Ascending aorta (tissue), 2 donors: ENCODE measurements at regions of chr17 and their contacts with region 1.

Region 1: GRCh38 chr17:39730095-39730921 is at the start of gene MIEN1:
- DNase-seq: peak; percentile 36 to 95
- H3K4me3 ChIP-seq: peak within 1 kb of the TSS; percentile 73 to 87
- H3K27ac ChIP-seq: peak within 1 kb of the TSS; percentile 80 to 95
- H3K4me1 ChIP-seq: peaks cover 0 to 10% of the 10 kb centered on the region in 2 donors
- H3K27me3 ChIP-seq: no peaks in the 10 kb centered on the region
- CTCF ChIP-seq: peak; percentile 89 to 96 (median 95)
- total RNA-seq, gene MIEN1: 64.2 TPM

Region 2: GRCh38 chr17:39621523-39622379 is 108.6 kb before region 1 on chr17:
- intact Hi-C with region 1: loop called (anchors 1 kb)
- DNase-seq: peak; percentile 53 to 93
- H3K4me3 ChIP-seq: no peak overlapping the region
- H3K27ac ChIP-seq: no peak overlapping the region
- H3K4me1 ChIP-seq: peaks cover 1 to 5% of the 10 kb centered on the region in 2 donors
- H3K27me3 ChIP-seq: peaks cover 4% of the 10 kb centered on the region
- CTCF ChIP-seq: peak; percentile 98 to 100 (median 100)

Region 3: DNA sequence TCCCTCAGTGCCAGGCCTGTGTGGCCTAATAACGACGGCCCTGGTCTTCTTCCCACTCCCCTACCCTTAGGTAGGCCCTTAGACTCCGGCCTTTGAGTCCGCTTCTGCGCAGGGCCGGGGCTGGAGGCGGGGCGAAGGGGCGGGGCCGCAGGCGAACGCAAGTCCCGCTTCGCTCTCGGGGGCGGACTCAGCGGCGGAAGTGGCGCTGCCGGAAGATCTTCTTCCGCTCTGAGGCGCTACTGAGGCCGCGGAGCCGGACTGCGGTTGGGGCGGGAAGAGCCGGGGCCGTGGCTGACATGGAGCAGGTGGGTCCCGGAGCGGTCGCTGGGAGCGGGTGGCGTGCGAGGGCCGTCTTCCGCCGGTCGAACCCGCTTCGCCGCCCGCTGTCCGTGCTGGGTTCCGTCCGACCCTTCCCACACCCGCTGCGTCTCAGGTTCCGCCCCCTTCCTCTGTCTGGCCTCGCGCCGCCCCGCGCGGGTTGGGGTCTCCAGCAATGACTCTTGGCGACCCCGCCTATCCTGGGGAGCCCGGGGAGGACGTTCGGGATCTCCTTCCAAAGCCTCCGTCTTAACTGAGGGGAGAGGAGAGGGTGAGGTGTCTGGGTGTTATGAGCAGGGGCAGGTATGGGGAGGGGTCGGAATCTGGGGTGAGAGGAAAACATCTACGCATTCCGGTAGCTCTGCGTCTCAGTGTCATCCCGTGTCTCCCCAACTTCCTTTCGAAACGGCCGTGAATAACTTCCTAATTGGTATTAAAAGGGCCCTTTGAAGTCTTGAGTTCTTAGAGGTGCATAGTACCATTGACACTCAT is 93.2 kb before region 1 on chr17 and contains the start of gene STARD3:
- intact Hi-C with region 1: loop called (anchors 5 kb)
- DNase-seq: peak; percentile 63 to 93
- H3K4me3 ChIP-seq: peak within 1 kb of the TSS; percentile 68 to 84
- H3K27ac ChIP-seq: peak within 1 kb of the TSS; percentile 83 to 89
- H3K4me1 ChIP-seq: peaks cover 11 to 27% of the 10 kb centered on the region in 2 donors
- H3K27me3 ChIP-seq: no peaks in the 10 kb centered on the region
- CTCF ChIP-seq: peak; percentile 13 to 34 (median 14)
- total RNA-seq, gene STARD3: 87.6 TPM

Region 4: DNA sequence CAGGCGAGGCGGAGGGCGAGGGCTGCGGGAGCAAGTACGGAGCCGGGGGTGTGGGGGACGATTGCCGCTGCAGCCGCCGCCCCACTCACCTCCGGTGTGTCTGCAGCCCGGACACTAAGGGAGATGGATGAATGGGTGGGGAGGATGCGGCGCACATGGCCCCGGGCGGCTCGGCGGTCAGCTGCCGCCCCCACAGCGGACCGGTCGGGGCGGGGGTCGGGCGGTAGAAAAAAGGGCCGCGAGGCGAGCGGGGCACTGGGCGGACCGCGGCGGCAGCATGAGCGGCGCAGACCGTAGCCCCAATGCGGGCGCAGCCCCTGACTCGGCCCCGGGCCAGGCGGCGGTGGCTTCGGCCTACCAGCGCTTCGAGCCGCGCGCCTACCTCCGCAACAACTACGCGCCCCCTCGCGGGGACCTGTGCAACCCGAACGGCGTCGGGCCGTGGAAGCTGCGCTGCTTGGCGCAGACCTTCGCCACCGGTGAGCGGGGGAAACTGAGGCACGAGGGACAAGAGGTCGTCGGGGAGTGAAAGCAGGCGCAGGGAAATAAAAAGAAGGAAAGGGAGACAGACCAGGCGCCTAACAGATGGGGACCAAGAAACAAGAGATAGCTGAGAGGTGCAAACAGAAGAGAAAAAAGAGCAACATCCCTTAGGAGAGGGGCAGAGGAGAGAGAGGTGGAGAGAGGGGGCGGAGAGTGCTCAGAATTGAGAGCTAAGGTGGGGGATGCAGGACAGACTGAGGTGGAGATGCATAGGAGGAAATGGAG is 61.9 kb before region 1 on chr17 and contains the start of gene PNMT:
- intact Hi-C with region 1: loop called (anchors 5 kb)
- DNase-seq: no peak
- H3K4me3 ChIP-seq: peak within 1 kb of the TSS; percentile 37 to 63
- H3K27ac ChIP-seq: peak within 1 kb of the TSS; percentile 68 to 74
- H3K4me1 ChIP-seq: peaks cover 25 to 58% of the 10 kb centered on the region in 2 donors
- H3K27me3 ChIP-seq: no peaks in the 10 kb centered on the region
- CTCF ChIP-seq: peak; percentile 52 to 70 (median 54)
- total RNA-seq, gene PNMT: 5.1 TPM

Region 5: GRCh38 chr17:39687811-39688518 is 42.3 kb before region 1 on chr17 and contains the start of gene PGAP3:
- intact Hi-C with region 1: loop called (anchors 1 kb)
- DNase-seq: peak; percentile 60 to 93
- H3K4me3 ChIP-seq: peak within 1 kb of the TSS; percentile 50 to 79
- H3K27ac ChIP-seq: peak within 1 kb of the TSS; percentile 92 to 95
- H3K4me1 ChIP-seq: peaks cover 0 to 13% of the 10 kb centered on the region in 2 donors
- H3K27me3 ChIP-seq: no peaks in the 10 kb centered on the region
- CTCF ChIP-seq: no peak
- total RNA-seq, gene PGAP3: 29.5 TPM

Region 6: DNA sequence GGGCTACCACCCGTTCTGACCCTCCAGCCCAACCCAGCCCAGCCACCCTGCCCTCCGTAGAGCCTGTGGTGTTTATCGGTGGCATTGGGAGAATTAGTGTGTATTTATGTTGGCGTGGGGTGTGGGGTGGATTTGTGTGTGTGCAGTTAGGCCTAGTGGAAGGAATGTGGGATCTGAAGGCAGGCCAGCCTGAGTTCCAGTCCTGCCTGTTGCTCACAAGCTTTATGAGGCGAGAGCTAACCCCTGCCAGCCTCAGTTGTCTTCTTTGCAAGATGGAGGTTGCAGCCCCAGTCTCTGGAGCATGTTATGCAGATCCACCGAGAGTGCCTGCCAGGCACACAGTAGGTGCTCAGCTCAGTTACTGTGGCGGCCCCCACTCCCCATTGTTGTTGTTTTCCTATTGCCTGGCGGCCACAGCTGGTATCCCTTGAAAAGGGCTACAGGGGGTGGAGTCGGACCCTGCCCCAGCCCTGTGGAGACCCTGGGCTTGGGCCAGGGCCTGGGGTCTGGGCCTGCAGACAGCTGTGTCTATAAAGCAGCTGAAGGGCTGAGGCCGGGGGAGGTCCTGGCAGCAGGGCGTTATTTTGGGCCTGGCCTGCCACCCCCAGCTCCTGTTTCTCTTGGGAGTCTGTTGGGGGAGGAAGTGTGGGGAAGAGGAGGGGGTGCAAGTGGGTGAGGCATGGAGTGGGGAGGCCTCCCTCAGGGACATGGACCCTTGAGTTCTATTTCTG is 25.3 kb before region 1 on chr17:
- intact Hi-C with region 1: loop called (anchors 2 kb)
- DNase-seq: peak in 1 of 2 donors; percentile 83
- H3K4me3 ChIP-seq: peak overlapping the region in 1 of 2 donors; percentile 38
- H3K27ac ChIP-seq: peak overlapping the region; percentile 83 to 88
- H3K4me1 ChIP-seq: peaks cover 7 to 38% of the 10 kb centered on the region in 2 donors
- H3K27me3 ChIP-seq: no peaks in the 10 kb centered on the region
- CTCF ChIP-seq: peak; percentile 51 to 78 (median 65)

Region 7: DNA sequence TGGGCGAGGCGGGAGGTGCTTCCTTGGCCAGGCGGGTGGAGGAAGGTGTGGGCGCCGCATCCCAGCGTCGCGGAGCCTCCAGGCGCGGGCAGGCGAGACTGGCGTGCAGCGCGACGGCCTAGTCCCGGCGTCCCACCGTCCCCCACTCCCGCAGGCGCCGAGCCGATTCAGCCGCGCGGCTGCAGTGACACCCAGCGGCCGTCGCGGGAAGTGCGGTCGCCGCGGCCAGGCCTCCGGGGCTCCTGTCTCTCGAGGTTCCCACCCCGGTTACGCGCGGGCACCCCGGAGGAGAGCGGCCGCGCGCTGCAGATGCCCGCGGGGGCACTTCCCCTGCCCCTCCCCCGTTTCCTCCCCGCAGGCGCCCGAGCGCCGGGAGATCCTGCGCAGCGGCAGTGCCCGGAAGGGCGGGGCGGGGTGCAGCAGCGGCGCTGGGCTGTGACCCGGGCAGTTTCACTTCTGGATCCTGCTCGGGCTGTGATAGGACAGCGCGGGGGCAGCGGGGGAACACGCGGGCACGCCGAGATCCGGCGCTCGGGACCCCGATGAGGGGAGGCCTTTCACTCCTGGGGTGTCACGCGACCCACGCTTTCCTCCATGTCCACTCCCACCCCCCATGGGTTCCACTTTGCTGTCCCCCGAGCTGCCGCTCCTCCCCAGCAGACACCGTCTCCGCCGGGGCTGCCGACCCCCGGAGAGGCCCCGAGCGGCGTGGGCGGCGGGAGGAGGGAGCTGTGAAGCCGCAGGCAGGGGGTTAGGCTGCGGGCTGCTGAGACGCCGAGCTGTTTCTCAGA is 24.0 kb after region 1 on chr17:
- intact Hi-C with region 1: loop called (anchors 1 kb)
- DNase-seq: peak; percentile 73 to 96
- H3K4me3 ChIP-seq: peak overlapping the region; percentile 74 to 80
- H3K27ac ChIP-seq: peak overlapping the region; percentile 87 to 90
- H3K4me1 ChIP-seq: peaks cover 3 to 17% of the 10 kb centered on the region in 2 donors
- H3K27me3 ChIP-seq: no peaks in the 10 kb centered on the region
- CTCF ChIP-seq: peak; percentile 88 to 99 (median 99)